Activated CD4-positive, alpha-beta memory T cell treated with anti-CD3 and anti-CD28 coated beads for 36 hours (primary cell): ENCODE measurements at regions of chr1 and their contacts with region 1.

Region 1: DNA sequence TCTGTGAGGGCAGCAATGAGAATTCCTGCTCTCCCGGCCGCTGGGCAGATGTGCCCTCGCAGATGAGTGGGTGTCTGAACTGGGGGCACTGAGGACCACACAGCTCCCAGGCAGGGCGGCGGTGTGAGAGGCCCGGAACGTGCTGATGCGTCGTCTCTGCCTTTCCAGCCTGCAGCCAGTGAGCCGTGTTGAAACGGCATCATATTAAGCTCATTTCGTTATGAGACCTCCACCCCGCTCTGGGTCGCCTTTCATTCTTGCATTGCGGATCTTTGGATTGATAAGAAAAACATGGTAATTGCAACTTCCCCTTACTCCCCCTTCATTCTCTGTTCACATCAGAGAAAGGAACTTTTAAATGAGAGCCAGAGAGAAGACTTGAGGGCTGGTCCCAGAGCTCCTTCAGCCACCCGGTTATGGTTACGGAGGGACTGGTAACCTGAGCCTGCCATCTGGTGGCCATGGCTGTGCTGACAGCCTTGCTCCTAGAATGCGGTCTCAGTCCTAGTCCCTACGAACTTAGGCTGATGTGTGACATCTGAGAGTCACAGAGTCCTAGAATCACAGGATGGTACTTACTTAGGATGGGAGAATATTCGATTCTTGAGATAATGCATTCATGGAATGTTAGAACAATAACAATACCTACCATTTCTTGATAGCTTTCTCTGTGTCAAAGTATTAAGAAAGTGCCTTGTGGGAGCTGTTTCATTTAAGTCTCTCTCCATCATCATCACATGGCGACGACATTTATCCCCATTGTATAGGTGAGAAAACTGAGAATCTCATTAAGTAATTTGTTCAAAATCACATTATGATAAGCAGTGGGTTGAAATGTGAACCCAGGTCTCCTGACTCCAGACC is 271.0 kb downstream of the TRABD2B start:
- DNase-seq: peak; percentile 79
- H3K4me3 Mint-ChIP-seq: peak overlapping the region; percentile 27
- H3K27ac Mint-ChIP-seq: no peak overlapping the region
- H3K4me1 Mint-ChIP-seq: peaks cover 14% of the 10 kb centered on the region
- H3K27me3 Mint-ChIP-seq: peaks cover 37% of the 10 kb centered on the region

Region 2: DNA sequence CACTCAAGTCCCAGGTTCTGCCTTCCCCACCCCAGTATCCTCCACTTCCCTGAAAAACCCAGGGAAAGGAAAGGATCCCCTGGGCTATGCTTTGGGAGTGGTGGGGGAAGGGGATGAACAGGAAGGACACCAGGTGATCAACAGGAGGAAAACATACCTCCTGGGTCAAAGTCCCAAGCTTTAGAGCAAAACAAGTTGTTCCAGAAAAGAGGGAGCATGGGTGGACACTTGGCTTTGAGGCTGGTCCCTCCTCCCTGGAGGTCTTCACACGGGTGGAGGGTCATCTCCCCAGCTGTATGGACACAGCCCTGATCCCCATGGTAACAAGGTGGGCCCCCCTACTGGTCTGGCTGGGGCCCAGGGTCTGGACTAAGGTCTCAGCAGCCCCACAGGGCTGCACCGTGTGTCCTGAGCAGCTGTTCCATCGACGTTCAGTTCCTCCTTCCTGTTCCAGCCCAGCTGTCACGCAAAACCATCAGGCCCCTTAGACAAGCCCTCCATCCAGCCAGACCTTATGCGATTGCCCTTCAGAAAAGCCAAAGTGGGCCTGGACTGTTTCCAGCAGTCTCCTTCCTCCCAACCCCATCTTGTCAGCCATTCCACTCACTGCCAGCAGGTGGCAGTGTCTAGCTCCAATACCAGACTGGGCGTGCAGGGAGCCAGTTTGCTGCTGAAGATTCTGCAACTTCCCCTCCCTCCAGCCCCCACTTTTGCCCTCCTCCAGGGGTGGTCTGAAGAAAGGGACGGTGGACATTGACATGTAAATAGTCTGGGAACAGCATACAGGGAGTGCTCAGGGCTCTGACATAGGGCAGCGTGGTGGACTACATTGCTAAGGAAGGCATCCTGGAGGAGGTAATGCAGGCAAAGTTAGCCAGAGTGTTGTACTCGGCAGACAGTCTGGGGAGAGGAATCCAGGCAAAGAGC is 533.5 kb before region 1 on chr1:
- CTCF ChIA-PET with region 1: interaction called, 12 read pairs
- POLR2A ChIA-PET with region 1: no interaction called
- intact Hi-C with region 1: no loop called
- DNase-seq: peak; percentile 78
- H3K4me3 Mint-ChIP-seq: no peak overlapping the region
- H3K27ac Mint-ChIP-seq: no peak overlapping the region
- H3K4me1 Mint-ChIP-seq: peaks cover 3% of the 10 kb centered on the region
- H3K27me3 Mint-ChIP-seq: peaks cover 5% of the 10 kb centered on the region

Region 3: GRCh38 chr1:47432071-47433036 is 293.9 kb before region 1 on chr1:
- CTCF ChIA-PET with region 1: interaction called, 89 read pairs
- POLR2A ChIA-PET with region 1: interaction called, 5 read pairs
- intact Hi-C with region 1: loop called (anchors 1 kb)
- DNase-seq: peak; percentile 77
- H3K4me3 Mint-ChIP-seq: peak overlapping the region; percentile 16
- H3K27ac Mint-ChIP-seq: no peak overlapping the region
- H3K4me1 Mint-ChIP-seq: peaks cover 41% of the 10 kb centered on the region
- H3K27me3 Mint-ChIP-seq: peaks cover 13% of the 10 kb centered on the region

Region 4: GRCh38 chr1:47710329-47711071 is 15.7 kb before region 1 on chr1:
- CTCF ChIA-PET with region 1: interaction called, 50 read pairs
- POLR2A ChIA-PET with region 1: no interaction called
- intact Hi-C with region 1: loop called (anchors 1 kb)
- DNase-seq: peak; percentile 77
- H3K4me3 Mint-ChIP-seq: peak overlapping the region; percentile 18
- H3K27ac Mint-ChIP-seq: no peak overlapping the region
- H3K4me1 Mint-ChIP-seq: peaks cover 7% of the 10 kb centered on the region
- H3K27me3 Mint-ChIP-seq: peaks cover 69% of the 10 kb centered on the region

Region 5: DNA sequence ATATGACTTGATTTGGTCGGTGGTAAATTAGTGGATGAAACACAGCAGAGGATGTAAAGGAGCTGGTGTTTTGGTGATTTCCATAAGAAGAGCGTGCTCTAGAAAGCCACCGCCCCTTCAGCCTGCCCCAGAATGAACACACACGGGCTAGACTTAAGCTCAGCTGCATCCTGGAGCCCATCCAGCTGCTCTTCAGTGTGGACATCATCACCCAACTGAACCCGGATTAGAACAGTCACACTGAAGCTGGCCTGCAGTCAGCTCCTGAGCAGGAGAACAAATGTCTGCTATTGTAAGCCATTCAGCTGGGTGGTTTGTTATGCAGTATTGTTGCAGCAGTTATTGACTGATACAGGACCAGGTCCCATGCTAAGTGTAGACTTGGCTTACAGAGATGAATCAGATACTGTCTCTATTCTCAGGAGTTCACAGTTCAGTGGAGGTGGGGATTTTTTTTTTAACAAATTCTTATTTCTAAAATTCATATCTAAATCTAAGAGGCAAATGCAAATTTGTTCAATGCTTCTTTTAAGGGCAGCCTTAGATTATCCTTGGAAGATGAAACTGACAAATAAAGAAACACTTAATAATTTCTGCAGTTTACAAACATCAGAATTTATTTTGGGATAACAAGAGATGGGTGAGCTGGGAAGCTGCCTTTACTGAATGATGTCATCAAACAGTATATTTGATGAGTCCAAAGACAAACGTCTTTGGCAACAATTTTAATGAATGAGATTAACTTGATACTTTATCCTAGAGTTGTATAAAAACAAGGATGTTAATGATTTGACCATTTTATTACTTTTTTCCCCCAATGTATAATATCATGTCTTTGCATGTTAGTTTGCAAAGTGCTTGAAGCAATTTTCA is 19.7 kb after region 1 on chr1:
- CTCF ChIA-PET with region 1: interaction called, 13 read pairs
- POLR2A ChIA-PET with region 1: no interaction called
- intact Hi-C with region 1: no loop called
- DNase-seq: no peak
- H3K4me3 Mint-ChIP-seq: no peak overlapping the region
- H3K27ac Mint-ChIP-seq: no peak overlapping the region
- H3K4me1 Mint-ChIP-seq: no peaks in the 10 kb centered on the region
- H3K27me3 Mint-ChIP-seq: peaks cover 9% of the 10 kb centered on the region